GM10248 (cell line): ENCODE measurements at regions of chr17 and their contacts with region 1.

Region 1: DNA sequence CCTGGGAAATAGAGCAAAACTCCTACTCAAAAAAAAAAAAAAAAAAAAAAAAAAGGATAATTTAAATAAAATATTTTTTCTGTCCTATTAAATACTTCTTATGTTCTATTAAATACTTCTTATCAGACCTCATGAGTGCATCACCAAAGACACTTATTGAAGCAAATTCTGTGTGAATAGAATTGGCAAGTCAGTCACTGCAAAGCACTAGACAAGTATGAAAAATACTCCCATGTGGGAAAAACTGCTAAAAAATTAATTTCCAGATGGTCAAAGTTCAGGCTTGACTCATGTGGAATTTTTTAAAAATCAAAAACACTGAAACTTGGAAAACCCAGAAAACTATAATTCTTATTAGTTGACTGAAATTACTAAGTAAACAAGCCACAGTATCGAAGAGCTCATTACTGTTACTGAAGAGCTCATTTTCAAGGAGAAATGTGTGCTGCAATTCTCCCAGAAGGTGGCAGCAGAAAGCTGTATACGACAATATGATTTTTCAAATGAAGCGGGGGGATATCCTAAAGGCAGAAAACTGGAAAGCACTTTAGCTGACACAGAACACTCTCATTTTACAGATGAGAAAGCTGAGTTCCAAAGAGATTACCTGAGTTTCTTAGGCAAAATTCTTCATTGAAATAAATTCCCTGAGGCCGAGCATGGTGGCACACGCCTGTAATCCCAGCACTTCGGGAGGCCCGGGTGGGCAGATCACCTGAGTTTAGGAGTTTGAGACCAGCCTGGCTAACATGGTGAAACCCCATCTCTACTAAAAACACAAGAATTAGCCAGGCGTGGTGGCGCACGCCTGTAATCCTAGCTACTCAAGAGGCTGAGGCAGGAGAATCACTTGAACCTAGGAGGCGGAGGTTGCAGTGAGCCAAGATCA is 15.9 kb upstream of the FBXO47 start:
- DNase-seq: peak; percentile 72
- CTCF ChIP-seq: peak; percentile 74

Region 2: DNA sequence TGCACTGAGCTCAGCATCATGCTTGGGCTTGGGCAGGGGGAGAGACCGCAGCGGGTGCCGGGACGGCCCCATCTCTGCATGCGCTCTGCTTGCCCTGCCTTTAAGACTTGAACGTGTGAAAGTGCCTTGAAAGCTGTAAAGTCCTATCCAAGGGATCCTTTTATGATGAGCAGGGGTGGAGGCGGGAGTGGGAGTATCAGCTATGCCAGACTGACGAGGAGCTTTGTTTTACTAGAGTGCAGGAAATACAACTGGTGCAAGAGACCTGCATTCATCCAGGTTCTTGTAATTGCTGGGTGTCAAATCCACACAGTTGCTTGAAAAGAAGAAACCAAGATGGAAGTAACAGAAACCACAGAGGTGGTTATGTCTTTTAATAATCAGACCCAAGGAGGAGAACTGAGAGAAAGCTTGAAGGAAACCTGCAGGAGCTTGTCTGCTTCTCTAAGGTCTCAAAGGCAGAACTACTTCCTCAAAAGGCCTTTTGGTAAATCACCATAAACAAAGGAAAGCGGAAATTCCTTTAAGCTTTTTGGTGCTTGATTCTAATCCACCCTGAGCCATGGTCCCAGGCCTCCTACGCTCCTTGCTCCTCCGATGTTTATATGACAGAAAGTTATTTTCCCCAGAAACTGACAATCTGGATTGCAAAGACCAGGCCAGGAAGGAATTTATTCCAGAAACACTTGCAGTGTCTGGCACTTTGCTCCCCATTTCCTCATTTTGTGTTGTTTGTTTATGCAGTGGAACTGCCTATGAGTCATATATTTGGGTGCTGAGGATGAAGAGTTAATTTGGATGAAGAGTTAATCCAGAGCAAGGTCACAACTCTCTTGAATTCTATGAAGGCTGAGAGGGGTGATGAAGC is 35.4 kb after region 1 on chr17:
- CTCF ChIA-PET with region 1: interaction called, 23 read pairs
- POLR2A ChIA-PET with region 1: no interaction called
- DNase-seq: peak; percentile 29
- CTCF ChIP-seq: no peak

Region 3: DNA sequence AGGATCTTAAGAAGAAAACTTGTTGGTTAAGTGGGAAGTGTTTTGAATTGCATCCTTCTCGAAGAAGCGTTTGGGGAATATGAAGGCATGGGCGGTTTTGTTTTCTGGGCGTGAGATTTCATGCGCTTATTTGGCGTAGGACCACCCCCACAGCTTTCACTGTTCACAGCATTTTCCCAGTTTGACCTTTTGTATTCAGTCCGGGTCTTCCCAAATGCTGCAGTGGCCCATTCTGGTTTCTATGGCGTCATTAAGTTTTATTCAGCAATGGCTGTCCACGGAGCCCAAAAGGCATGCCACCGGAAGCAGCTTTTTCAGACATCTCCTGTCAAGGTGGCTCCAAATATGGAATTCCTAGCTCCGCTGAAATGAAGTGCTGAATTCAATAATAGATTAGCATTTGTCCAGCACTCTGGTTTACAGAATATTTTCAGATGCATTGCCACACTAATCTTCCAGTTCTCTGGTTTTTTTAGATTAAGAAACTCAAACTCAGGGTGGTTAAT is 74.7 kb after region 1 on chr17:
- CTCF ChIA-PET with region 1: interaction called, 10 read pairs
- POLR2A ChIA-PET with region 1: no interaction called
- DNase-seq: no peak
- CTCF ChIP-seq: no peak

Region 4: DNA sequence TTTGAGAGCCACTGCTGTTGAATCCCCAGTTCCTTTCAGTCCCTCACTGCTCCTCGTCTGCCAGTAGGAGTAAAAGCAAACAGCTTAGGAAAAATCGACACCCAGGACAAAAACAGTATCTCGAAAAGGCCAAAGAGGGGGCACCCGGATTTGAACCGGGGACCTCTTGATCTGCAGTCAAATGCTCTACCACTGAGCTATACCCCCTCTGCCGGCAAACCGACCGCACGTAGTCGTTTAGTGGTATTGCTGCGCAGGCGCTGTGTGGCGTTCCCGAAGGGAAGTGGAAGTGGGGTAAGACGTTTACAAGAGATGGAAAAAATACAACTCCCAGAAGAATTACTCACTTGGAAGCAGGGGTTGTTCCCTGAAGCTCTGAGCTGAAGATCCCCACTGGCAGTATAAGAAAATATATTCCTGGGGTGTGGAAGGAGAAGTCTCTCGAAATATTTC is 170.5 kb after region 1 on chr17:
- CTCF ChIA-PET with region 1: interaction called, 143 read pairs
- POLR2A ChIA-PET with region 1: no interaction called
- DNase-seq: peak; percentile 75
- CTCF ChIP-seq: no peak

Region 5: GRCh38 chr17:39174907-39175694 is 192.0 kb after region 1 on chr17:
- CTCF ChIA-PET with region 1: interaction called, 48 read pairs
- POLR2A ChIA-PET with region 1: no interaction called
- DNase-seq: peak; percentile 89
- CTCF ChIP-seq: peak; percentile 66

Region 6: DNA sequence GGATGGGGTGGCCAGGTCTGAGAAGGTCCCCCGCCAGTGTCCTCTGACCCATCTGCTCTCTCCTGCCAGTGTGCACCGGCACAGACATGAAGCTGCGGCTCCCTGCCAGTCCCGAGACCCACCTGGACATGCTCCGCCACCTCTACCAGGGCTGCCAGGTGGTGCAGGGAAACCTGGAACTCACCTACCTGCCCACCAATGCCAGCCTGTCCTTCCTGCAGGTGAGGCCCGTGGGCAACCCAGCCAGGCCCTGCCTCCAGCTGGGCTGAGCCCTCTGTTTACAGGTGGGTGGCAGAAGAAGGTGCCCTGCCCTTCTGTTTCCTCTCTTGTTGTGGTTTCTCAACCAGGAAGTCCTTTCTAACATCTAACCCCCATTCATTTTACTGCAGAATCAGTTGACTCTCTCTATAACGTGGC is 723.8 kb after region 1 on chr17:
- CTCF ChIA-PET with region 1: no interaction called
- POLR2A ChIA-PET with region 1: no interaction called
- DNase-seq: no peak
- CTCF ChIP-seq: no peak